Activated CD4-positive, alpha-beta T cell treated with anti-CD3 and anti-CD28 coated beads, Interleukin-2, amount 10 ng/mL, durations not matched to agents 7 days and 5 days (primary cell): ENCODE measurements at regions of chr7 and their contacts with region 1.

Region 1: DNA sequence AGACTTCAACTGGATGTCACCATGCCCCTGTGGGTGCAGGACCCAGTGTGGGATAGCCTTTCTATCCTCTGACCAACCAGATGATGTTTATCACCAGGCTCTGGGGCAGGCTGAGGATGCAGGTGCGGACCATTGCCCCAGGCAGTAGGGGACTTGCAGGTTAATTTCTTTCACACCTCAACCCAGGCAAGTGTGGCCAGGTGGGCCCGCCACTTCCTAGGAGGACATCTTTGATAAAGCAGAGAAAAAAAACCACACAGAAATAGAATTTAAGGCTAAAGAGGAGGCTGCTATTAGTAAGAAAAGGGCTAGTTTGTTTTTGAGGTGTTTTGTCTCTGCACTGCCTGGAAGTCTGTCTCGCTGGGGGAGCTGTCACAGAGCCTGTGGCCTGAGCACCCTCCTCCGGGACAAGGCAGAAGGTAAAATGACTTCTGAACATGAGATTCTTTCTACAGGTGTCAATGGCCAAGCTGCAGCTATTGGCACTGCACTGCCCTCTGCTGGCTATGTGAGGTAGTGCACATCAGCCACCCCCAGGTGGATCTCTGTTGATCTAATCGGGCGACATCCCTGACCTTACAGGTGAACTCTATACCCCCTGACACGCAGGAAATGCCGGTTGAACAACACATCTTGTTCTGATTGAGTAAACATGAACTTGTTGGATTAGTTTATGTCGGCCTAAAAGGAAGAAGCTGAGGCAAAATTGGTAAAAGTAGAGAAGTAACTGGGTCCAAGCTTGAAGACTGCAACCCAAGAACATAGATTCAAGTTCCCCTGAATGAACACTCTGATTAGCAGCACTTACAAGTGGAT is 21.0 kb downstream of the UPP1 start:
- DNase-seq: peak; percentile 92
- H3K4me3 Mint-ChIP-seq: no peak overlapping the region
- H3K27ac Mint-ChIP-seq: peak overlapping the region; percentile 66
- H3K4me1 Mint-ChIP-seq: peaks cover 15% of the 10 kb centered on the region
- H3K27me3 Mint-ChIP-seq: no peaks in the 10 kb centered on the region

Region 2: GRCh38 chr7:47945261-47946001 is 164.6 kb before region 1 on chr7:
- CTCF ChIA-PET with region 1: interaction called, 17 read pairs
- POLR2A ChIA-PET with region 1: no interaction called
- DNase-seq: peak; percentile 80
- H3K4me3 Mint-ChIP-seq: no peak overlapping the region
- H3K27ac Mint-ChIP-seq: no peak overlapping the region
- H3K4me1 Mint-ChIP-seq: no peaks in the 10 kb centered on the region
- H3K27me3 Mint-ChIP-seq: no peaks in the 10 kb centered on the region

Region 3: GRCh38 chr7:47965456-47965855 is 144.6 kb before region 1 on chr7:
- CTCF ChIA-PET with region 1: interaction called, 12 read pairs
- POLR2A ChIA-PET with region 1: no interaction called
- DNase-seq: no peak
- H3K4me3 Mint-ChIP-seq: no peak overlapping the region
- H3K27ac Mint-ChIP-seq: peak overlapping the region; percentile 14
- H3K4me1 Mint-ChIP-seq: peaks cover 12% of the 10 kb centered on the region
- H3K27me3 Mint-ChIP-seq: no peaks in the 10 kb centered on the region

Region 4: GRCh38 chr7:47991741-47992311 is 118.2 kb before region 1 on chr7:
- CTCF ChIA-PET with region 1: interaction called, 20 read pairs
- POLR2A ChIA-PET with region 1: interaction called, 3 read pairs
- DNase-seq: peak; percentile 90
- H3K4me3 Mint-ChIP-seq: peak overlapping the region; percentile 75
- H3K27ac Mint-ChIP-seq: peak overlapping the region; percentile 89
- H3K4me1 Mint-ChIP-seq: peaks cover 21% of the 10 kb centered on the region
- H3K27me3 Mint-ChIP-seq: no peaks in the 10 kb centered on the region

Region 5: GRCh38 chr7:48094751-48095562 is 15.1 kb before region 1 on chr7:
- CTCF ChIA-PET with region 1: interaction called, 12 read pairs
- POLR2A ChIA-PET with region 1: interaction called, 4 read pairs
- DNase-seq: no peak
- H3K4me3 Mint-ChIP-seq: no peak overlapping the region
- H3K27ac Mint-ChIP-seq: peak overlapping the region; percentile 32
- H3K4me1 Mint-ChIP-seq: peaks cover 91% of the 10 kb centered on the region
- H3K27me3 Mint-ChIP-seq: no peaks in the 10 kb centered on the region